ENCODE measurements at regions of chr12 and their contacts with region 1.

Region 1: DNA sequence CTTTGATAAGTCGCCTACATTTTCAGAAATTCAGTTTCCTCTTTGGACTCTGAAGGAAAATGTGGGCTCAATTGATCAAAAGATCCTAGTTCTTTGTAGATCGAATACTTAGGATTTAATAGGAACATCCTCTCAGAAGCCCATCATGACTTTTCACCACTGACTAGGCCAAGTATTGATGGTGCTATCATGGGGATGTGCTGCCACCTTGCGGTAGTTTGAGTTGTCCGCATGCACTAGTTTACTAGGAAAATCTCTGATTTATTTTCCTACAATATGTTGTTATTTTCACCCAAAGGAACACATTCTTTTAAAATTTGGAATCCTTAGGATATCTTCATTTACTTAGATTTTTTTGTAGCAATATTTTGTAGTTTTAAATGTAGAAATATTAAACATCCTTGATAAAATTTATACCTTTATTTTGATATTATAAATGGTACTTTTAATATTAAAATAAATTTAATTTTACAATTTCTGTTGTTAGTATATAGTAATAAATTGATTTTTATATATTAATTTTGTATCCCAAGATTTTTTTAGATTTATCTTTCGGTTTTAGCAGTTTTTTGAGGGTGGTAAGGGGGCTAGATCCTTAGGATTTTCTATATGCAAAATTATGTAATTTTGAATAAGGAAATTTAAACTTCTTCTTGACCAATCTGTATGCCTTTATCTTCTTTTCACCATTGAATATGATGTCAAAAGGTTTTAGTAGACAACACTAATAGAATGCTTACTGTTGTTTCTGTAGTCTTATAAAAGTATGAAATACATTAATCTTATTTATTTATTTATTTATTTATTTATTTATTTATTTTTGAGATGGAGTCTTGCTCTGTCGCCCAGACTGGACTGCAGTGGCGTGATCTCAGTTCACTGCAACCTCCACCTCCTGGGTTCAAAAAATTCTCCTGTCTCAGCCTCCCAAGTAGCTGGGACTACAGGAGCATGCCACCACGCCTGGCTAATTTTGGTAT is 52.9 kb upstream of the OR9K2 start:
- DNase-seq: peak; percentile 57
- H3K4me3 Mint-ChIP-seq: no peak overlapping the region
- H3K27ac Mint-ChIP-seq: no peak overlapping the region
- H3K4me1 Mint-ChIP-seq: peaks cover 11% of the 10 kb centered on the region
- H3K27me3 Mint-ChIP-seq: peaks cover 29% of the 10 kb centered on the region

Region 2: GRCh38 chr12:54596526-54596946 is 476.8 kb before region 1 on chr12:
- intact Hi-C with region 1: loop called (anchors 5 kb)
- DNase-seq: peak; percentile 9
- H3K4me3 Mint-ChIP-seq: no peak overlapping the region
- H3K27ac Mint-ChIP-seq: no peak overlapping the region
- H3K4me1 Mint-ChIP-seq: peaks cover 7% of the 10 kb centered on the region
- H3K27me3 Mint-ChIP-seq: peaks cover 8% of the 10 kb centered on the region

Region 3: GRCh38 chr12:54723379-54724256 is 349.7 kb before region 1 on chr12:
- intact Hi-C with region 1: loop called (anchors 1 kb)
- DNase-seq: no peak
- H3K4me3 Mint-ChIP-seq: no peak overlapping the region
- H3K27ac Mint-ChIP-seq: no peak overlapping the region
- H3K4me1 Mint-ChIP-seq: peaks cover 10% of the 10 kb centered on the region
- H3K27me3 Mint-ChIP-seq: peaks cover 14% of the 10 kb centered on the region

Region 4: GRCh38 chr12:54853995-54854566 is 219.3 kb before region 1 on chr12 and contains the start of gene MUCL1:
- intact Hi-C with region 1: loop called (anchors 1 kb)
- DNase-seq: peak; percentile 66
- H3K4me3 Mint-ChIP-seq: no peak within 1 kb of the TSS
- H3K27ac Mint-ChIP-seq: no peak within 1 kb of the TSS
- H3K4me1 Mint-ChIP-seq: peaks cover 15% of the 10 kb centered on the region
- H3K27me3 Mint-ChIP-seq: peaks cover 1% of the 10 kb centered on the region
- total RNA-seq, gene MUCL1: not detected in 2 replicates

Region 5: DNA sequence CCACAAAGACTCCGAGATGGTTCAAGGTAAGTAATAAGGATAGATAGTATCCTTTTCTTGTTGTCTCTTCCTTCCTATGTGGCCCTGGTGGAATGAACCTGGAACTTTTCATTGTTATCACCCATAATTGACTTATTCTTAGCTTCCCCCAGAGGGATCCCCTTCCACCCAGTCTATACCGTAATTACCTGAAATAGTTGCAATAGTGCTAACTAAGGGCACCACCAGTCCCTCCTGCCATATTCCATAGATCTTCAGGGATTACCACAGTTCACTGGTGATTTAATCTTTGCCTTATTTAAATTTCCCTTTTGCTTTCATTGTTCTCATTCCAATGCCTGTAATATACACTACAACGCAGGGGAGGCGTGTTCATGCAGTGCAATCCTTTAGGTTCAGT is 39.0 kb after region 1 on chr12:
- intact Hi-C with region 1: no loop called
- DNase-seq: no peak
- H3K4me3 Mint-ChIP-seq: no peak overlapping the region
- H3K27ac Mint-ChIP-seq: no peak overlapping the region
- H3K4me1 Mint-ChIP-seq: no peaks in the 10 kb centered on the region
- H3K27me3 Mint-ChIP-seq: peaks cover 3% of the 10 kb centered on the region

Region 6: GRCh38 chr12:55132816-55133215 is 59.5 kb after region 1 on chr12:
- intact Hi-C with region 1: loop called (anchors 1 kb)
- DNase-seq: no peak
- H3K4me3 Mint-ChIP-seq: no peak overlapping the region
- H3K27ac Mint-ChIP-seq: no peak overlapping the region
- H3K4me1 Mint-ChIP-seq: no peaks in the 10 kb centered on the region
- H3K27me3 Mint-ChIP-seq: peaks cover 7% of the 10 kb centered on the region